ENCODE measurements at regions of chr3 and their contacts with region 1.

Region 1: DNA sequence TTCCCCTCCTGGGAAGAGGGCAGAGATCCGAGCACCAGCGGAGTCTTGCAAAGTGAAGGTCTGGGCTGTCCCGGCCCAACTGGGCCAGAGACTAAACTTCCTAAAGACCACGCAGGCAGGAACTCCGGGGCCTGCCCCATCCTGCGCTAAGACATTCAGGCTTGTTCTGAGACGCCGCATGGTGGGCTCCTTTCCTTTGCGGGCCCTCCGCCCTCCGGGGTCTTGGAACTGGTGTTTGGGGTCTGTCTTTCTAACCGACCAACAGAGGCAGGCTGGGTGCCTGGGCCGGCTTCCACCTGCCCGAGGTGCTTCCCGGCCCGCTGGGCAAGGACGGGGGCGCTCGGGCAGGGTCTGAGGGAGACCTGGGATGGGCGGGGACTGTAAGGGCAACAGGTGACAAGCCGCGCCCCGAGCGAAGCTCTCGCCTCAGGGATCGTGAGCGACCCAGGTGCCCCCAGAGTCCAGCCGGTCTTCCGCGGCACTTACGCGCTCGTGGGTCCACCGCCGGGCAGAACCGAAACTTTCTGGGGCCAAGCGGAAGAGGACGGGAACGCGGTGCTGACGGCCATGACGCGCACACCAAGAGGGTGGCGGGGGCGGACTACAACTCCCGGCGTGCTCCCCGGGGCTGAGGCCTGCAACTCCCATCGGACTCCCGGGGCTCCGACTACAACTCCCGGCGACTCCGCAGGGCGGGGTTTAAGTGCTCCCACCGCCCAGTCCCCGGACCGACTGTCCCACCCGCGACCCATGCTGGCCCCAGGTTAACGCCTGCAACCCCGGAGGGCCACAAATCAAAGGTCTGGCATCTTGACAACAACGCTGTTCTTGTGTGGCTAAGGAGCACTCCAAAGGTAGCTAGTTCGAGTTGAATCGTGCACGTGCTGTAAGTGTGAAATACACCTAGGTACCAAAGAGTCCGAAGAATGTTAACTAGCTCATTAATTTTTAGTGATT is at the start of gene FYCO1:
- DNase-seq: peak; percentile 70 to 93 (median 85)
- ATAC-seq: peak; percentile 78
- H3K4me3 ChIP-seq: peak within 1 kb of the TSS; percentile 77 to 90
- H3K4me3 Mint-ChIP-seq: peak within 1 kb of the TSS; percentile 86
- H3K27ac ChIP-seq: peak within 1 kb of the TSS; percentile 77 to 93
- H3K27ac Mint-ChIP-seq: peak within 1 kb of the TSS; percentile 93
- H3K4me1 ChIP-seq: peaks cover 42% of the 10 kb centered on the region
- H3K4me1 Mint-ChIP-seq: peaks cover 44% of the 10 kb centered on the region
- H3K27me3 ChIP-seq: no peaks in the 10 kb centered on the region
- H3K27me3 Mint-ChIP-seq: no peaks in the 10 kb centered on the region
- CTCF ChIP-seq: no peak
- total RNA-seq, gene FYCO1: 16.6 to 16.7 TPM

Region 2: DNA sequence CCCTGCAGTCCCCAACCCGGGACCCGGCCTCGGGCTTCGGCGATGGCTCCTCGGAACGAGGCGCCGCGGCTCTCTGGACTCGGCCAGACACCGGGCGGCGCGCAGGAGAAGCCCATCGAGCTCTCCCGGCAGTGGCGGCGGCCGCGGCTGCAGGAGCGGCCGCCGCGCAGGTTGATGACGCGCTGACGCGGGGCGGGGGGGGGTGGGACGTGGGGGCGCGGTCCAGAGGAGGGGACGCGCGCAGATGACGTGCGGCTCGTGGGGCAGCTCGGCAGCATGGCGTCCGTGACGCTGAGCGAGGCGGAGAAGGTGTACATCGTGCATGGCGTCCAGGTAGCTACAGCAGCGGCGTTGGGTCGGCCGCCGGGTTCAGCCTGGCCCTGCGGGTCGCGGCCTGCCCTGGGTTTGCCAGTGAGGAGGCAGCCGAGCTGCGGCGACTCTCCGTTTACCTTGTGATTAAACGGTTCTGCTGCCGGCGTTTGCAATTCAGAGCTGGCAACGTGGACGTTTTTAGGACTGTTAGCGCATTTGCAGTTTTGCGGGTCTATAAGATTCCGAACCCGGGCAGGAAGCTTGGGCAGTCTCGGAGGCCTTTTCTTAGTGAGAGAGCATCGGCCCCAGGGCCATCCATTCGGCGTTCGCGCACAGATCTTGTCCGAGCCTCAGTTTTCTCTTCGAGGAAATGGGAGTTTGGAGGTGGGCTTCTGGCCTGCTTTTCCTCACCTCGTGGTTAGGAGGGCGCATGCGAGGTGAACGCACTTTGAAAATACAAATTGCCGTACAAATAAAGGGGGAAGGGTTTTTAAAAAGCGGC is 1019.3 kb before region 1 on chr3 and contains the starts of genes EXOSC7 and ZDHHC3:
- CTCF ChIA-PET with region 1: no interaction called
- POLR2A ChIA-PET with region 1: no interaction called
- intact Hi-C with region 1: loop called in 1 of 2 experiments (anchors 5 kb)
- DNase-seq: peak; percentile 75 to 95 (median 86)
- ATAC-seq: peak; percentile 97
- H3K4me3 ChIP-seq: peak within 1 kb of the TSS; percentile 97 to 99
- H3K4me3 Mint-ChIP-seq: peak within 1 kb of the TSS; percentile 93
- H3K27ac ChIP-seq: peak within 1 kb of the TSS; percentile 90 to 94
- H3K27ac Mint-ChIP-seq: peak within 1 kb of the TSS; percentile 95
- H3K4me1 ChIP-seq: peaks cover 37% of the 10 kb centered on the region
- H3K4me1 Mint-ChIP-seq: peaks cover 65% of the 10 kb centered on the region
- H3K27me3 ChIP-seq: no peaks in the 10 kb centered on the region
- H3K27me3 Mint-ChIP-seq: no peaks in the 10 kb centered on the region
- CTCF ChIP-seq: no peak
- total RNA-seq, gene EXOSC7: 35.2 to 39.3 TPM
- total RNA-seq, gene ZDHHC3: 42.2 to 42.4 TPM

Region 3: GRCh38 chr3:45841757-45842491 is 153.6 kb before region 1 on chr3 and contains the start of gene LZTFL1:
- CTCF ChIA-PET with region 1: no interaction called
- POLR2A ChIA-PET with region 1: no interaction called
- intact Hi-C with region 1: loop called (anchors 1 kb)
- DNase-seq: peak; percentile 74 to 97 (median 91)
- ATAC-seq: peak; percentile 83
- H3K4me3 ChIP-seq: peak within 1 kb of the TSS; percentile 88 to 89
- H3K4me3 Mint-ChIP-seq: peak within 1 kb of the TSS; percentile 96
- H3K27ac ChIP-seq: peak within 1 kb of the TSS; percentile 89 to 93
- H3K27ac Mint-ChIP-seq: peak within 1 kb of the TSS; percentile 96
- H3K4me1 ChIP-seq: peaks cover 11% of the 10 kb centered on the region
- H3K4me1 Mint-ChIP-seq: peaks cover 16% of the 10 kb centered on the region
- H3K27me3 ChIP-seq: no peaks in the 10 kb centered on the region
- H3K27me3 Mint-ChIP-seq: no peaks in the 10 kb centered on the region
- CTCF ChIP-seq: no peak
- total RNA-seq, gene LZTFL1: 10.0 TPM

Region 4: DNA sequence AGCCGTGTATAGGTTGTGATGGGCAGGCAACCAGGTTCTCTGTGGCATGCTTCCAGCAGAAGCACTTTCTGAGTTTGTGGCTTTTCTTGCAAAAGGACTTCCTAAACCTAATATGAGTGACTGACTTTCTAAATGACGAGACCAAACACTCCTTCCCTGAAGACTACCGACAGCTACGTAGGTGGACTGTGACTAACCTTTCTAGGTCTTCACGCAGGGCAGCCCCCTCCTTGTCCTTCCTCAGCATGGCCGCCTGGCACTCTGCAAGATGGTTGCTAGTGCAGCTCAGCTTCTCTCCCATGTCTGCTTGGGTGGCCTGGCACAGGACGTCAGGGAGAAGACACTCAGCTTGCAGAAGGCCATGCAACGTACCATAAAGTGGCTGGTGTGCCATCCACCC is 31.4 kb before region 1 on chr3:
- CTCF ChIA-PET with region 1: interaction called, 9 read pairs
- POLR2A ChIA-PET with region 1: interaction called, 21 read pairs
- intact Hi-C with region 1: no loop called
- DNase-seq: peak in 3 of 9 experiments; percentile 41 to 57 (median 53)
- ATAC-seq: peak; percentile 70
- H3K4me3 ChIP-seq: no peak overlapping the region
- H3K4me3 Mint-ChIP-seq: no peak overlapping the region
- H3K27ac ChIP-seq: peak overlapping the region in 1 of 2 experiments; percentile 66
- H3K27ac Mint-ChIP-seq: peak overlapping the region; percentile 91
- H3K4me1 ChIP-seq: peaks cover 33% of the 10 kb centered on the region
- H3K4me1 Mint-ChIP-seq: peaks cover 66% of the 10 kb centered on the region
- H3K27me3 ChIP-seq: no peaks in the 10 kb centered on the region
- H3K27me3 Mint-ChIP-seq: no peaks in the 10 kb centered on the region
- CTCF ChIP-seq: no peak

Region 5: GRCh38 chr3:45978006-45978761 is 17.3 kb before region 1 on chr3:
- CTCF ChIA-PET with region 1: interaction called, 5 read pairs
- POLR2A ChIA-PET with region 1: interaction called, 24 read pairs
- intact Hi-C with region 1: loop called (anchors 1 to 2 kb)
- DNase-seq: peak in 7 of 9 experiments; percentile 29 to 66 (median 57)
- ATAC-seq: no peak
- H3K4me3 ChIP-seq: no peak overlapping the region
- H3K4me3 Mint-ChIP-seq: peak overlapping the region; percentile 47
- H3K27ac ChIP-seq: peak overlapping the region in 1 of 2 experiments; percentile 60
- H3K27ac Mint-ChIP-seq: peak overlapping the region; percentile 93
- H3K4me1 ChIP-seq: peaks cover 46% of the 10 kb centered on the region
- H3K4me1 Mint-ChIP-seq: peaks cover 76% of the 10 kb centered on the region
- H3K27me3 ChIP-seq: no peaks in the 10 kb centered on the region
- H3K27me3 Mint-ChIP-seq: no peaks in the 10 kb centered on the region
- CTCF ChIP-seq: no peak

Region 6: DNA sequence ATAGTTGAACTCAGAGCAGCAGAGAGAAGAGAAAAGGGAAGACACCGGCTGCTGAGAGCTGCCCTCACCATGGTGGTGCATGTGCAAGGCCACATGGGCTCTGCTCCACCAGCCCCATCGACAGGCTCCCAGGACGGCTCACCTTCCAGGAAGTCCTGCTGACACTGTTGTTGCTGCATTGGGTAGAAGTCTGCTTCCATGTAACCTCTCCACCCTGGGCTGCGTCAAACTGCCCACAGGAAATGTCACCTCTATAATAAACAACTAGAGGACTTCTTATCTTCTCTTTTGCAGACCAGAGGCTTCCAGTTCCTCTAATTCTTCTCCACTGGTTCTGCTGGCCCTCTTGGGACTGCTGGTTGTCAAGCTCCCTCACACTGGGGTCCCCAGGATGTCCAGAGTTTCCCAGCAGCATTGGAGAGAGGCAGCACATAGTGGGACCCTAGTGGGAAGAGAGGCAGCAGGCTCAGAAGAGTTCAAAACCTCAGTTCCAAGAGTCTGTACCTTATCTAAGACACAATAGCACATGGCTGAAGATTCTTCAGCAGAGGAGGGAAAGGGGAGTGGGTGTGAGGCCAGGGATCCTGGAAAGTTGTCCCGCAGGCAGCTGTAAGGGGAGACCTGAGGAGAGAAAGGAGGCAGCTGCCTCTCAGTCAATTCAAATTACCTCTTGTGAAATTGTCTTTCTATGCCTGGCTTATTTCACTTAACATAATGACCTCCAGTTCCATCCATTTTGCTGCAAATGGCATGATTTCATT is 241.0 kb after region 1 on chr3:
- CTCF ChIA-PET with region 1: no interaction called
- POLR2A ChIA-PET with region 1: no interaction called
- intact Hi-C with region 1: no loop called
- DNase-seq: peak in 3 of 9 experiments; percentile 3 to 49 (median 20)
- ATAC-seq: no peak
- H3K4me3 ChIP-seq: no peak overlapping the region
- H3K4me3 Mint-ChIP-seq: no peak overlapping the region
- H3K27ac ChIP-seq: no peak overlapping the region
- H3K27ac Mint-ChIP-seq: no peak overlapping the region
- H3K4me1 ChIP-seq: no peaks in the 10 kb centered on the region
- H3K4me1 Mint-ChIP-seq: peaks cover 3% of the 10 kb centered on the region
- H3K27me3 ChIP-seq: no peaks in the 10 kb centered on the region
- H3K27me3 Mint-ChIP-seq: no peaks in the 10 kb centered on the region
- CTCF ChIP-seq: no peak

Region 7: GRCh38 chr3:46349485-46350261 is 354.2 kb after region 1 on chr3:
- CTCF ChIA-PET with region 1: no interaction called
- POLR2A ChIA-PET with region 1: no interaction called
- intact Hi-C with region 1: no loop called
- DNase-seq: peak in 2 of 9 experiments; percentile 44 to 65
- ATAC-seq: peak; percentile 45
- H3K4me3 ChIP-seq: peak overlapping the region in 1 of 2 experiments; percentile 11
- H3K4me3 Mint-ChIP-seq: peak overlapping the region; percentile 33
- H3K27ac ChIP-seq: peak overlapping the region in 1 of 2 experiments; percentile 62
- H3K27ac Mint-ChIP-seq: peak overlapping the region; percentile 46
- H3K4me1 ChIP-seq: peaks cover 44% of the 10 kb centered on the region
- H3K4me1 Mint-ChIP-seq: peaks cover 66% of the 10 kb centered on the region
- H3K27me3 ChIP-seq: no peaks in the 10 kb centered on the region
- H3K27me3 Mint-ChIP-seq: no peaks in the 10 kb centered on the region
- CTCF ChIP-seq: no peak